CD4-positive, alpha-beta T cell (primary cell): ENCODE measurements at regions of chr18 and their contacts with region 1.

Region 1: DNA sequence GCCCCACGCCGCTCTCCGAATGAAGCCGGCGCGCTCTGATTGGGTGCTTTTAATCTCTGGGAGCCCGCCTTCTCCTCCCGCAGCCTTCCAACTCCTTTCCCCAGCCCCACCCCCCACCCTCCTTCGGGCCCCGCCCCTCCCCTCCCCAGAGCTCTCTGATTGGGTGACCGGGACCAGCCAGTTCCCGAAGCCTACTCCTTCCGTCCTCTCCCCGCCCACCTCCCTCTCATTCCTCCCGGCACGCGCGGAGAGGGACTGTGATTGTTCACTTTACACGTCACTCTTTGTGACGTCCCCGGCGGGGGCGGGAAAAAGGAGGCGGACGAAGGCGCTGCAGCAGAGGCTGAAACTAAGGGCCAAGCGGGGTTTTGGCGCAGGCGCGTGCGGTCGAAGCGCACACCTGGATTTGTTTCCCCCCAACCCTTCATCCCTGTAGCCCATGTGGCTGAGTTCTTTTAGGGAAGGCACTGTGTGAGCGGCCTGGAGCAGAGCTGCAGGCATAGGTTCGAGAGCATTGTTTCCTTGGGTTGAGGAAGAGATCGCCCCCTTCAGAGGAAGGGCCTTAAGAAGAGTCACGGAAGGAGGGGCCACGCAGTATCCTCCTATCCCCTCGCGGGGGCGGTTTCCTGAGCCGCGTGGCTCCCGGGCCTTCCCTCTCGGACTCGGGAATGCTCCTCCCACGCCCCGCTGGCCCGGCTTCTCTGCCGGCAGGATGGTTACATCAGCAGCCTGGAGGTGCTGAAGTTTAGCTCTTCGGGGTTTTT is at the start of gene MEX3C:
- DNase-seq: peak; percentile 97 to 99 (median 99)
- ATAC-seq: peak; percentile 83
- H3K4me3 ChIP-seq: peak within 1 kb of the TSS; percentile 88
- H3K4me3 Mint-ChIP-seq: peak within 1 kb of the TSS; percentile 94
- H3K27ac ChIP-seq: peak within 1 kb of the TSS; percentile 83 to 86
- H3K27ac Mint-ChIP-seq: peak within 1 kb of the TSS; percentile 96
- H3K4me1 ChIP-seq: peaks cover 17% of the 10 kb centered on the region
- H3K4me1 Mint-ChIP-seq: peaks cover 32% of the 10 kb centered on the region
- H3K27me3 ChIP-seq: no peaks in the 10 kb centered on the region
- H3K27me3 Mint-ChIP-seq: no peaks in the 10 kb centered on the region
- CTCF ChIP-seq: peak; percentile 31
- total RNA-seq, gene MEX3C: 70.8 to 76.1 TPM

Region 2: DNA sequence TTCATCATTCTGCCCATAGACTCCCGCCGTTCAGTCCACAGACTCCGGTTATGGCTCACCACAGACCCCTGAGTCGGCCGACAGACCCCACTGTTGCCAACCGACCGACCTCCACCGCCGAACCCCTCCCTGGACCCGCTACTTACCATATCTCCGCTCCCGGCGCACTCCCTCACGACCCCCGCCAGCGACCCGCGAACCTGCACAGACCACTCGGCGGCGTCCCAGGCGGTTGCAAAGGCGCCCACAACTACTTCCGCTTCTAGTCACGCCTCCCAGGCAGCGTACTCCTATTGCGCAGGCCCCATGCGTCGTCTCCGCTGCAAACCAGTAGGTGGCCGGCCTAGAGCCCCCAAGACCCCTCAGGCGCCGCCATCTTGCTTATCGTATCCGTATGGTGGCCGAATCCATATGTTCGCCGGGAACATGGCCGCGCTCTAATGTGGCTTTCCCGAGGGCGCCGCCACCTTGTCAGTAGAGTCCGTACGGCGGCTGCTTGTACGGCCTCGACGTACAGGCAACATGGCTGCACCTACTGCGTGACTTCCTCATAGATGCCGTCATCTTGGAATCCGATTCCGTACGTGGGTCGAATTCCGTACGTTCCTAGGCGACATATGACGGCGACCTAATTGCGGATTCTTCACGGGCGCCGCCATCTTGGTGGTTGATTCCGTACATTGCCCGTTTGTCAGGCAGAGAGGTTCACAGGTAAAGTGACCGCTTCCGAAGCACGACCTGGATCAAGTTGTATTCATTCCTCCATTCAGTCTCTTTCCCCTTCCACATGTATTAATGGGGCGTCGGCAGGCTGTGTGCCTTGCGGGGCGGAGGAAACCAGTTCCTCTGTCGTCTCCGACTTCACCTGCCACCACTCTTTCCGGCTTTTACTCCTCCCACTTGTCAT is 910.1 kb before region 1 on chr18 and contains the start of gene CXXC1:
- CTCF ChIA-PET with region 1: no interaction called
- POLR2A ChIA-PET with region 1: no interaction called
- intact Hi-C with region 1: loop called (anchors 5 to 10 kb)
- DNase-seq: peak; percentile 96 to 99 (median 97)
- ATAC-seq: peak; percentile 85
- H3K4me3 ChIP-seq: peak within 1 kb of the TSS; percentile 85
- H3K4me3 Mint-ChIP-seq: peak within 1 kb of the TSS; percentile 96
- H3K27ac ChIP-seq: peak within 1 kb of the TSS; percentile 72 to 93
- H3K27ac Mint-ChIP-seq: peak within 1 kb of the TSS; percentile 98
- H3K4me1 ChIP-seq: peaks cover 24% of the 10 kb centered on the region
- H3K4me1 Mint-ChIP-seq: peaks cover 27% of the 10 kb centered on the region
- H3K27me3 ChIP-seq: no peaks in the 10 kb centered on the region
- H3K27me3 Mint-ChIP-seq: no peaks in the 10 kb centered on the region
- CTCF ChIP-seq: peak; percentile 61
- total RNA-seq, gene CXXC1: 120 to 128 TPM

Region 3: DNA sequence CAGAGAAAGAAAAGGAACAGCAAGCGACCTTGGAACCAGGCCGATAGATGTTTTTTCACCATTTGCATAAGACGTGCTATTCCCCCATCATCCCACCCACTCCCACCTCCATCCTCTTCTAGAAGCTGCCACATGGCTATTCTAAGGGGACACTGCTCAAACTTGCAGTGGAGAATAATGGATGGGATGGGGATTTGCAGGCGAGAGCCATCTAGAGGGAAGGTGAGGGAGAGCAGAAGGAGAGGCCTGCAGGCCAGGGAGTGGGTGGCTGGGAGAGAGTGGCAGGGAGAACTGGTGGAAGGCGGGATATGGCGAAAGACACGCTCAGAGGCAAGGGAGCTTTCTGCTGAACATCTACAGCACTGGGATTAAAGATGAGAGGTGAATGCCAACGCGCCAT is 553.0 kb before region 1 on chr18:
- CTCF ChIA-PET with region 1: no interaction called
- POLR2A ChIA-PET with region 1: no interaction called
- intact Hi-C with region 1: no loop called
- DNase-seq: no peak
- ATAC-seq: no peak
- H3K4me3 ChIP-seq: no peak overlapping the region
- H3K4me3 Mint-ChIP-seq: no peak overlapping the region
- H3K27ac ChIP-seq: no peak overlapping the region
- H3K27ac Mint-ChIP-seq: no peak overlapping the region
- H3K4me1 ChIP-seq: no peaks in the 10 kb centered on the region
- H3K4me1 Mint-ChIP-seq: no peaks in the 10 kb centered on the region
- H3K27me3 ChIP-seq: peaks cover 0 to 2% of the 10 kb centered on the region in 2 experiments
- H3K27me3 Mint-ChIP-seq: no peaks in the 10 kb centered on the region
- CTCF ChIP-seq: no peak

Region 4: DNA sequence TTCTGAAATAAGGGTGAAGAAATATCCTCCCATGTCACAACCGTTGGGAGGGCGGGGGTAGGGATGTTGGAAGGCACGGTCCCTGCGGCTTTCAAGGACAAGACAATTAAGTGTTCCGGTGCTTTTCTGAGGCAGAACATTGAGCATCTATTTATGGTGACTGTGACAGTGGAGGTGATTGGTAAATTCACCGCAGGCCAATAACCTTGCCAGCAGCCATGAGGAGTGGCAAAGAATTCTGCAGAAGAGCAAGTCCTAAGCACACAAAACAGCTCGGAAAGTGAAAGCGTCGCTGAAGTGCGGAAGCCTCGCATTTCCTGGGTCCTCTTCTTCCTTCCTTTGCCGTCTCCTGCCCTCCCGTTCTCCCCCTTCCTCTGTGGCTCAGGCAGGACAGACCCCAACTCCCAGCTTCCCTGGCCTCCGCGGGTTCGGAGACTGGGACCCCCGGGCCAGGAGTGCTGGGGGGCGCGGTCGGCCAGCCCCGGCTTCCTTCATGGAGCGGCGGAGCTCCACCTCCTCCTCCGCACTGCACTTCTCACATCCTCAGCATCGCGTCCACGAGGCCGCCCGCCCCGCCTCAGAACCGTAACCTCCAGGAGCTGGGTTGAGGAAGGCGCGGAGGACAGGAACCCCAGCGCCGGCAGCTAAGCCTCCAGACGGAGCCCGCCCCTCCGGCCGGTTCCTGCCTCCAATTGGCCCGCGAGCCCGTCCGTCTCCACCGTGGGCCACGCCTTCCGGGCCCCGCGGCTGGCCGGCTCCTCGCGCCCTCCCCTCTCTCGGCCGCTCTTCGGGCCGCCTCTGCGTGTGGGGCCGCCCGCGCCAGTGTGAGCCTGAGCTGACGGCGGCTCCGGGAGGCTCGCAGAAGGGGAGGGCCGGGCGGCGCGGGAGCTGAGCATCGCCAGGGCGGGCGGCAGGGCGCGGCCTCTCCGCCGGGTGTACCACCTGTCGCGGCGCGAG is 319.2 kb before region 1 on chr18 and contains the start of gene ME2:
- CTCF ChIA-PET with region 1: no interaction called
- POLR2A ChIA-PET with region 1: interaction called, 18 read pairs
- intact Hi-C with region 1: loop called (anchors 5 kb)
- DNase-seq: peak; percentile 77 to 94 (median 88)
- ATAC-seq: peak; percentile 90
- H3K4me3 ChIP-seq: peak within 1 kb of the TSS; percentile 93
- H3K4me3 Mint-ChIP-seq: peak within 1 kb of the TSS; percentile 98
- H3K27ac ChIP-seq: peak within 1 kb of the TSS; percentile 95 to 97
- H3K27ac Mint-ChIP-seq: peak within 1 kb of the TSS; percentile 97
- H3K4me1 ChIP-seq: peaks cover 32% of the 10 kb centered on the region
- H3K4me1 Mint-ChIP-seq: peaks cover 28% of the 10 kb centered on the region
- H3K27me3 ChIP-seq: no peaks in the 10 kb centered on the region
- H3K27me3 Mint-ChIP-seq: peaks cover 6% of the 10 kb centered on the region
- CTCF ChIP-seq: no peak
- total RNA-seq, gene ME2: 15.6 to 16.1 TPM

Region 5: GRCh38 chr18:51029694-51030536 is 167.9 kb before region 1 on chr18 and contains the start of gene SMAD4:
- CTCF ChIA-PET with region 1: no interaction called
- POLR2A ChIA-PET with region 1: interaction called, 58 read pairs
- intact Hi-C with region 1: loop called (anchors 2 kb)
- DNase-seq: peak; percentile 97 to 99 (median 98)
- ATAC-seq: peak; percentile 78
- H3K4me3 ChIP-seq: peak within 1 kb of the TSS; percentile 77
- H3K4me3 Mint-ChIP-seq: peak within 1 kb of the TSS; percentile 100
- H3K27ac ChIP-seq: peak within 1 kb of the TSS; percentile 79 to 82
- H3K27ac Mint-ChIP-seq: peak within 1 kb of the TSS; percentile 100
- H3K4me1 ChIP-seq: peaks cover 35% of the 10 kb centered on the region
- H3K4me1 Mint-ChIP-seq: peaks cover 63% of the 10 kb centered on the region
- H3K27me3 ChIP-seq: no peaks in the 10 kb centered on the region
- H3K27me3 Mint-ChIP-seq: no peaks in the 10 kb centered on the region
- CTCF ChIP-seq: no peak
- total RNA-seq, gene SMAD4: 82.0 to 82.9 TPM

Region 6: GRCh38 chr18:51182824-51183223 is 15.0 kb before region 1 on chr18:
- CTCF ChIA-PET with region 1: interaction called, 5 read pairs
- POLR2A ChIA-PET with region 1: interaction called, 34 read pairs
- intact Hi-C with region 1: loop called in 1 of 2 experiments (anchors 2 kb)
- DNase-seq: no peak
- ATAC-seq: no peak
- H3K4me3 ChIP-seq: no peak overlapping the region
- H3K4me3 Mint-ChIP-seq: no peak overlapping the region
- H3K27ac ChIP-seq: no peak overlapping the region
- H3K27ac Mint-ChIP-seq: peak overlapping the region; percentile 17
- H3K4me1 ChIP-seq: peaks cover 7% of the 10 kb centered on the region
- H3K4me1 Mint-ChIP-seq: peaks cover 68% of the 10 kb centered on the region
- H3K27me3 ChIP-seq: no peaks in the 10 kb centered on the region
- H3K27me3 Mint-ChIP-seq: no peaks in the 10 kb centered on the region
- CTCF ChIP-seq: no peak